Breast epithelium (tissue), 4 donors: ENCODE measurements at regions of chr5 and their contacts with region 1.

Region 1: GRCh38 chr5:17282283-17283120 is 65.1 kb downstream of the BASP1 start:
- DNase-seq: no peak
- H3K4me3 ChIP-seq: no peak overlapping the region
- H3K27ac ChIP-seq: no peak overlapping the region
- H3K4me1 ChIP-seq: no peaks in the 10 kb centered on the region
- H3K27me3 ChIP-seq: no peaks in the 10 kb centered on the region
- CTCF ChIP-seq: no peak
- POLR2A ChIP-seq: no peak

Region 2: GRCh38 chr5:17302602-17303001 is 20.1 kb after region 1 on chr5:
- intact Hi-C with region 1: loop called (anchors 1 kb)
- DNase-seq: no peak
- H3K4me3 ChIP-seq: no peak overlapping the region
- H3K27ac ChIP-seq: no peak overlapping the region
- H3K4me1 ChIP-seq: no peaks in the 10 kb centered on the region
- H3K27me3 ChIP-seq: no peaks in the 10 kb centered on the region
- CTCF ChIP-seq: no peak
- POLR2A ChIP-seq: no peak

Region 3: GRCh38 chr5:17374973-17375884 is 92.7 kb after region 1 on chr5:
- intact Hi-C with region 1: no loop called
- DNase-seq: no peak
- H3K4me3 ChIP-seq: no peak overlapping the region
- H3K27ac ChIP-seq: no peak overlapping the region
- H3K4me1 ChIP-seq: no peaks in the 10 kb centered on the region
- H3K27me3 ChIP-seq: no peaks in the 10 kb centered on the region
- CTCF ChIP-seq: no peak
- POLR2A ChIP-seq: no peak